ENCODE measurements at regions of chr9 and their contacts with region 1.

Region 1: DNA sequence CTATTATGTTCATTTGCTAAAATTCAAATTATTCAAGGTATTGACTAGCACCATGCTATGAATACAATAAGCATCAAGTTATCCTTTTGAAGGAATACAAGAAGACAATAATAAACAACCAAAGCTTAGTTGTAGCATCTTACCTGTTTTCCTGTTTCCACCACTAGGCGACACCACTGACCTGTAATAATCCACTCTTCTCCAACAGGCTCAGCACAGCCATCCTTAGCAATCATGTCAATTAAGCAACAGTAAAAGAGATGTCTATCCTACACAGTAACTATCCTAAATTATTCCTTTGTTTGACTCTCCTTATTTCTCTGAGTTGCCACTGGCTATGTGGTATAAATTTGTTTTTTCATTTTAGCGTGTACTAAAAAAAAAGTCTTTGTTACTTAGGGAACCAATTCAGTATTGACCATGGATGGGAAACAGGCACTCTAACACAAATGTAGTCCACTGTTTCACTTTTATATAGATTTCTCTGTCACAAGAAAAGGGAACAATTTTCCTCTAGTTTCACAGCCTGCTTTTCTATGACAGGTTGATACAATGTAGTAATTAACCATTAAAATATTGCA is 46.2 kb downstream of the PCA3 start:
- DNase-seq: peak; percentile 56
- ATAC-seq: peak; percentile 86
- H3K4me3 Mint-ChIP-seq: no peak overlapping the region
- H3K27ac Mint-ChIP-seq: no peak overlapping the region
- H3K4me1 Mint-ChIP-seq: no peaks in the 10 kb centered on the region
- H3K27me3 Mint-ChIP-seq: no peaks in the 10 kb centered on the region
- CTCF ChIP-seq: peak; percentile 76

Region 2: GRCh38 chr9:76756268-76756640 is 54.2 kb before region 1 on chr9:
- CTCF ChIA-PET with region 1: interaction called, 16 read pairs
- POLR2A ChIA-PET with region 1: no interaction called
- DNase-seq: peak; percentile 69
- ATAC-seq: peak; percentile 95
- H3K4me3 Mint-ChIP-seq: no peak overlapping the region
- H3K27ac Mint-ChIP-seq: peak overlapping the region; percentile 9; the same call in 1 of the 2 replicates
- H3K4me1 Mint-ChIP-seq: peaks cover 13% of the 10 kb centered on the region
- H3K27me3 Mint-ChIP-seq: no peaks in the 10 kb centered on the region
- CTCF ChIP-seq: no peak

Region 3: DNA sequence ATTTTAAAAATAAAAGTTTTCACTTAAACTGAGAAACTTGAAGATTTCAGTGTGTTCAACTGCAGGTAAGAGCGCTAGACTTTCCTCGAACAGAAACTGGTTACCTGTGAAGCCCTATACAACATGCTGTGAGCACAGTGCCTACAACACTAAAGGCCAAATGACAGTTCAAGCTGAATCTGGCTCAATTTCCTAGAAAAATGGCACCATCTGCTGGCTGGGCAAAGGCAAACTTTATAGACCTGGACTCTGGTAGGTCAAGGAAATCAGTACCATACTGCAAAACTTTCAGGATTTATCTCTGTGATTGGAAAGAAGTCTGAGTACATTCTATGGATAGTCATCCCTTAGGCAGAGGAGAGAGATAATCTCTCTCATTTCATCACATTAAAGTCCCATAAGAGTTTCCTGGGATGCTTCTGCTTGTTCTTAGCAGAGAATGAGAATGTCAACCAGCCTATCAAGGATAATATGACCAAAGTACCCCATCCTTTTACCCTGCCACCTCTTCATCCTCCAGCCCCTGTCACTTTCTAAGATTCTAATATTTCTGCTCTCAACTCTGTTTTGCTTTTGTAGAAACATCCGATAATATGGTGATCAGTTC is 177.2 kb after region 1 on chr9:
- CTCF ChIA-PET with region 1: interaction called, 32 read pairs
- POLR2A ChIA-PET with region 1: interaction called, 3 read pairs
- DNase-seq: peak; percentile 47
- ATAC-seq: peak; percentile 89
- H3K4me3 Mint-ChIP-seq: no peak overlapping the region
- H3K27ac Mint-ChIP-seq: no peak overlapping the region
- H3K4me1 Mint-ChIP-seq: peaks cover 6% of the 10 kb centered on the region; the same call in 1 of the 2 replicates
- H3K27me3 Mint-ChIP-seq: no peaks in the 10 kb centered on the region
- CTCF ChIP-seq: 0 out of 2 replicates have a peak, but pooled peaks have one; percentile 20

Measured in WTC11 (cell line).